ENCODE measurements at regions of chr22 and their contacts with region 1.

Region 1: GRCh38 chr22:37581504-37581903 is 1.6 kb upstream of the LGALS2 start:
- DNase-seq: no peak

Region 2: GRCh38 chr22:37328017-37328416 is 253.5 kb before region 1 on chr22:
- intact Hi-C with region 1: loop called (anchors 10 kb)
- DNase-seq: no peak

Region 3: DNA sequence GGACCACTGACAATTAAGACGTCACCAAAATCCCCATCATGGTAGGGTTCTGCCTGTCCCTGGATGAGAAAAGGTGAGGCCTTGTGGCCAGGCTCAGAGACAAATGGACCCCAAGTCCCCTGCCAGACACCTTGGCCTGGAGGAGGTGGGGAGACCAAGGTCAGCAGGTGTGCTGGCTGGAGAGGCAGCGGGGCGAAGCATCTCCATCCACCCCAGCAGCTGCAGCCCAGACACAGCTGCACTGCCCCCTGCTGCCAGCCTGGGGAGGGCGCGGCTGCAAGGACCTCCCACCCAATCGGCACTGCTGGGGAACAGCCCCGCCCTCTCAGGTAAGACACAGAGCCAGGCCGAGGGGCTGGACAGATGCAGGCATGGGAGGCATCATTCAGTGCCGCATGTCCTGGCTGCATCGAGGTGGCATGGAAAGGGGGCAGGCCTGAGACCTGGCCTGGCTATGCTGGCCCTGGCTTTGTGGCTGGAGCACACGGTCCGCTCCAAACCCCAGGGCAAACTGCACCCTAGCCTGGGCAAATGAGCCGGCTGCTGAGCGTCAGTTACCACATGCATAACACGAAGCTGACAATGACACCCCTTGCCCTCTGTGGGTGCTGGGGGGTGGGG is 83.1 kb before region 1 on chr22:
- intact Hi-C with region 1: no loop called
- DNase-seq: no peak